ENCODE measurements at regions of chr2 and their contacts with region 1.

Region 1: DNA sequence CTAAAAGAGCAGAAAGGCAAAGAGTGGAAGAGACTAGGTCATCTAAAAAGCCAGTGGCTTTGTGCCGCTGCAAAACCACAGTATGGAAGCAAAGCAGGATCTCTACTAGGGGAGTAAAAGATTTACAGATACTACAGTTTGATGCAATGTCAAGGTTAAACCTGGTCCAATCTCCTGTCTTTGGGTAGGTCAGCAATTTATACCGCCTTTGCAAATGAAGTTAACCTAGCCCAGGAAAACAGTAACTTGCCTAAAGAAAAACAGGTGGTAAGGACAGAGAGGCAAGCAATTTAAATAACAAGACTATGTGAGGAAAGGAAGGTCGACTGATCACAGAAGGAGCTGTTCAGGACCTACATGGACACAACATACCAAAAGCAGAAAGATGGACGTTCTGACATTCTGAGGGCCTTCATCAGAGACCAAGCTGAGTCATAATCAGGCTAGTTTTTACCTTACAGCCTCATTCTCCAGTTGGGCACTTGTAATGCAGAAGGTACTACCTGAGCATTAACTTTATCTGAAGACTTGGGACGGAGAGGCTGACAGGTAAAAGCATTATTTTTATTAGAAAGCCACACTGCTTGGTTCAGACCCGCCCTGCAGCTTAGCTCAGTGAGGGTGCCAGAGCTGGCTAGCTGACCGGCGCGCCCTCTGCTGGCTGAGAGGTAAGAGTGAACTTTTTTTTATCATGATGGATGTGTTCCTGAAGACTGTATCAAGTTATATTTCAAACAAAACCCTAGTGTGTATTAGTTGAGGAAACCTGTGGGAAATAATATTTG is 15.9 kb downstream of the CDKL4 start:
- DNase-seq: peak; percentile 31
- H3K4me3 ChIP-seq: peak overlapping the region; percentile 30
- CTCF ChIP-seq: peak; percentile 83

Region 2: DNA sequence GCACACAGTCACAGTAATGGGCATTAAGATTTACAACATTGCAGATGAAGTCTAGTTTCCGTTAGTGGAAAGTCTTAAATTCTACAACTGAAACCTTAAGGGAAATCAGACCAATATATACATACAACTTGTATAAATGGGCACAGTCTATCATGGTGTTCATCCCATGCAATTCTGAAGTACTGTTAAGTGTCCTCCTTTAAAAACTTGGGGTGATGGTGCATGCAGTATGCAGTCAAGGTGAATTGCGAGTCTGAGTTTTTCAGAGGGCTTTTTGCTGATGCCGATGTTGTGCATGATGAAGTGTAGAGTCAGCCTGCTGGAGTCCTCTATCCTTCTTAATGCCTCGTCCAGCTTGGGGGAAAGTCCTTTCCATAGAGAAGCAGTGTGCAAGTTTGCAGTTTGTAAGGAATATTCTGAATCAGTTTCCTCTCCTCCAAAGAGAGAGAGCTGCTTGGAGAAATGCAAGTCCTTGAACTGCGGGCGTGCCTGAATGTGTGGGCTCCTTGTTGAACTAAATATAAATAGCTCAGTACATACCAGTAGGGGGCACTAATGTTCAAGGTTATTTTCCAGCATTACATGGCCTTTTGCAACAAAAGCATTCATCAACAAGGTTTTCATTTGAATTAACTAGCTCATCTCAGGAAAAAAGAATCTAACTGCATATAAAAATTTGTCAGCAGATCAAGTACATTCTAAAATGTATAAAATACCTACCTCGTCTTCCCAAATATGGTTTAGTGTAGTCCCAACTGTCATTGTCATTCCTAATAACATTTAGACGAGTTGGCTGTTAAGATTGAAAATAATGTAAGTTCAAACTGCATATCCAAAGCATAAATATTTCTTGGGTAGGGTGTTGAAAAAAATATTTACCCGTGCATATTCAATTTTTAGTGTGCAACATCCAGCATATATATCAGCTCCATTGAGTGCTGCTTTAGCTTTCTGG is 646.4 kb before region 1 on chr2:
- in situ Hi-C with region 1: no loop called
- DNase-seq: peak; percentile 70
- H3K4me3 ChIP-seq: no peak overlapping the region
- CTCF ChIP-seq: peak; percentile 49

Region 3: GRCh38 chr2:38947240-38948239 is 280.3 kb before region 1 on chr2:
- in situ Hi-C with region 1: loop called (anchors 25 kb)
- DNase-seq: peak; percentile 61
- H3K4me3 ChIP-seq: no peak overlapping the region
- CTCF ChIP-seq: peak; percentile 81

Region 4: DNA sequence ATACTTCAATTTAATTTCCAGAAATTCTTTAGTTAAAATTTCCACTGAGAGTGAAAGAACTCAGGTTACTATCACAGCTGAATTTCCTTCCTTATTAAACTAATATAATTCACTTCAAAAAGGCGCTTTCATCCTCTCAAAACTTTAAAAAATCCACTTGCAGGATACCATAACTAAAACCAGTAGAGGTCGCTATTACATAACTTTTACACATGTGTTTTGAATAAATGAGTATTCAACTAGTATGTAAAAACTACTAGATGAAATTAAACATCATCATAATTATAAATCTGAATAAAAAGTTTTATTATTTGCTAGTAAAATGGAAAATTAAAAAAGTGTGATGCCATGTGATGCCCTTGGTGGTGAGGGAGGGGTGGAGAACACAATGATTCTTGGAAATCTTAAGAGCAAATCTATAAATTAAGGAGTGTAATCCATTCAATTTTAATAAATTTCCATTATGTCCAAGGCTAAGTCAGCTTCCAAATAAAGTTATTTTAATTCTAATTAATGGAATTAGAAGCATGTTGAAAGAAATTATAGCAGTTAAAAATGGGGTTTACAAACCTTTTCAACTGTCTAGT is 168.4 kb before region 1 on chr2:
- in situ Hi-C with region 1: loop called (anchors 25 kb)
- DNase-seq: peak; percentile 53
- H3K4me3 ChIP-seq: no peak overlapping the region
- CTCF ChIP-seq: no peak

Region 5: GRCh38 chr2:39325966-39326365 is 98.1 kb after region 1 on chr2:
- in situ Hi-C with region 1: no loop called
- DNase-seq: no peak
- H3K4me3 ChIP-seq: no peak overlapping the region
- CTCF ChIP-seq: no peak